ENCODE measurements at regions of chr3 and their contacts with region 1.

Region 1: DNA sequence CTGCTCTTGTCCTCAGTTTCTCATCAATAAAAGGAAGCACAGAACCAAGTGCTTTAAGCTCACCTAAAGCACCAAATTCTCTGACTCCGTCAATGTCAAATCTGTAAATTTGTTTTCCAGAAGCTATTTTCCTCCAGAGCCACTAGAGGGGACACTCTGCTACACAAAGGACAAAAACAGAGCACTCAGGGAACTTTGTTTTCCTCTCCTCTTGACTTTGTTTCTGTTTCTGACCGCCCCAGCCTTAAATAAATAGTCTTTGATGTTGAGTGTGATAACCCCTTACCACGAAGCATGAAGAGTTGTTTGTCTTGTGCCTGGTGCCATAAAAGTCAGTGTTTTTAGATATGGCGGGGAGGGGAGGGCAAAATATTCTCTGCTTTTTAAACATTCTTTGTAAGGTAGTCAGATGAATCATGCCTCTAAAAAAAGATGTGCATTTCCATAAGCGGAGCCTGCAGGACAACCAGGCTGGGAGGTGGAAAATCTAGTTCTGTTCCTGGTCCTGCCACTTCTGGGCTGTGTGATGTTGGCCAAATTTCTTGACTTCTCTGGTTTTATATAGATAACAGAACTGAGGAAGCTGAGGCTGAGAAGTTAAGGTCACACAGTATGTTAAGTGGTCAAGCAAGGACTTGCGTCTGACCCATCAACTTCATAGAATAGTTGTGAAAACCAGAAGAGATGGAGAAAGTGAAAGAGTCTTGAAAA is 7.3 kb upstream of the ZBTB38 start:
- DNase-seq: no peak
- ATAC-seq: peak; percentile 86
- H3K4me3 Mint-ChIP-seq: no peak overlapping the region; the same call in 1 of the 2 replicates
- H3K27ac Mint-ChIP-seq: peak overlapping the region; percentile 26; the same call in 1 of the 2 replicates
- H3K4me1 Mint-ChIP-seq: peaks cover 13% of the 10 kb centered on the region
- H3K27me3 Mint-ChIP-seq: no peaks in the 10 kb centered on the region
- CTCF ChIP-seq: 0 out of 2 replicates have a peak, but pooled peaks have one; percentile 15

Region 2: DNA sequence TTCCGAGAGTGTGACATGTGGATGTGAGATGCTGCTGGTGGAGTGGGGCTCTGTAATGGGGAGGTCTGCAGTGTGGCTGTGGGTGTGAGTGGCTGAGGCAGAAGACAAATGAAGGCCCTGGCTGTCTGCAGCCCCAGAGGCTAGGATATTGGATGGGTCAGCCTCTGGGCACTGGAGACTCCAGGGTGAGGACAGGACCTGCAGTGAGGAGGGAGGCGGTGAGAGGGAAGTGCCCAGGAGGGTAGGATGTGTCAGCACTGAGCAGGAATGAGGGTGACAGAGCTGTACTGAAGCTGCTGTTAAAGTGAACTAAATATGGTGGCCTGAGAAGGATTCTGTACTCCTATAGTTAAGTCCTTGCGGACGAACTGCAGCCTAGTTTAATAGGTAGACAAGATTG is 156.7 kb before region 1 on chr3:
- CTCF ChIA-PET with region 1: no interaction called
- POLR2A ChIA-PET with region 1: no interaction called
- DNase-seq: no peak
- ATAC-seq: no peak
- H3K4me3 Mint-ChIP-seq: no peak overlapping the region
- H3K27ac Mint-ChIP-seq: no peak overlapping the region
- H3K4me1 Mint-ChIP-seq: peaks cover 14% of the 10 kb centered on the region
- H3K27me3 Mint-ChIP-seq: no peaks in the 10 kb centered on the region; the same call in 1 of the 2 replicates
- CTCF ChIP-seq: no peak

Region 3: DNA sequence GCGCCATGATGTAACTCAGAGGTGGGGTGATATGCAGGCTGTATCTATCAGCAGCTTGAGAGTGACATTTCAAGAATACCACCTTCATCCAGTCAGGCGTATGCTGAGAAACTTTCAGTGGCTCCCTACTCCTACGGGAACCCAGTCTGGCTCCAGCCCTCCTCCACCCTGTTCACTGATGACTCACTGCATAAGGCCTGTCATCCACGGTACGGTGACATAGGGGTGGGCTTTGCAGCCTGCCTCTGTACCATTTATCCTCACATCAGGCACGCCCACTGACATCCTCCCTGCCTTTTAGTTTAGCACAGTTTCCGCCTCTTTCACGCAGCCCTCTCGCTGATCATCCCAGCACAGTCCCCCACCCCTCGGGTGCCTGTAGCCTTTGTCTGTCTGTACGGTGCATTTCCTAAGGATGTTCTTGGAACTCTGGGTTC is 117.8 kb before region 1 on chr3:
- CTCF ChIA-PET with region 1: no interaction called
- POLR2A ChIA-PET with region 1: no interaction called
- DNase-seq: no peak
- ATAC-seq: peak; percentile 25; the same call in 1 of the 2 replicates
- H3K4me3 Mint-ChIP-seq: no peak overlapping the region
- H3K27ac Mint-ChIP-seq: no peak overlapping the region
- H3K4me1 Mint-ChIP-seq: peaks cover 25% of the 10 kb centered on the region
- H3K27me3 Mint-ChIP-seq: no peaks in the 10 kb centered on the region
- CTCF ChIP-seq: no peak

Region 4: DNA sequence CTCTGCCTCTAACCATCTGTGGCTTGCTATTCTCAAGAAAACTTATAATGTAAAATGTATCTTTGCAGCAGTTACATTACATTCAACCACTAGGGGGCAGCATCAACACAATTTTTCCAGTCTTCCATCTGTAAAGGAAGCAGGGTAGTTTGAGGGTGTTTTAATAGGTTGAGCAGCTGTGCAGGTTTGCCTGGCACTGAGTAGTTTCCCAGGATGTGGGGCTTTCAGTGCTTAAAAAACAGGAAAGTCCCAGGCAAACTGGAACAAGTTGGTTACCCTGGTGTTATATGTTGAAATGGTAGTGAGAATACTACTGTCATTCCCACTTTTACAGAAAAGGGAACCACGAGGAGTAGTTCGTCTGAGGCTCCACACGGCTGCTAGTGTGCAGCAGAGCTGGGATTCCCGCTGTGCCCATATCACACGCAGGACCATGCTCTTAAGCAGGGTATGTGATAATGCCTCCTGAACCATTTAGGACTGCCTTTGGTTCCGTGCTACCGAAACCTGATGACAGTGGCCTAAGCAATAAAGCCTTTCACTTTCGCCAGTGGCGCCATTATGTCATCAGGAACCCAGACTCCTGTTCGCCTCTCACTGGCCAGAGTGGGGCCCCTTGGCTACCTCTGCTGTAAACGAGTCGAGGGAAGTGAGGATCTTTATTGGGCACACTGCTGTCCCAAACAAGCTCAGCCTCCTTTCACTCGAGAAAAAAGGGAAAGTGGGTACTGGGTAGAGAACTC is 57.4 kb before region 1 on chr3:
- CTCF ChIA-PET with region 1: interaction called, 12 read pairs
- POLR2A ChIA-PET with region 1: no interaction called
- DNase-seq: peak; percentile 33
- ATAC-seq: peak; percentile 77
- H3K4me3 Mint-ChIP-seq: no peak overlapping the region
- H3K27ac Mint-ChIP-seq: no peak overlapping the region
- H3K4me1 Mint-ChIP-seq: peaks cover 4% of the 10 kb centered on the region
- H3K27me3 Mint-ChIP-seq: peaks cover 28% of the 10 kb centered on the region
- CTCF ChIP-seq: peak; percentile 66

Region 5: DNA sequence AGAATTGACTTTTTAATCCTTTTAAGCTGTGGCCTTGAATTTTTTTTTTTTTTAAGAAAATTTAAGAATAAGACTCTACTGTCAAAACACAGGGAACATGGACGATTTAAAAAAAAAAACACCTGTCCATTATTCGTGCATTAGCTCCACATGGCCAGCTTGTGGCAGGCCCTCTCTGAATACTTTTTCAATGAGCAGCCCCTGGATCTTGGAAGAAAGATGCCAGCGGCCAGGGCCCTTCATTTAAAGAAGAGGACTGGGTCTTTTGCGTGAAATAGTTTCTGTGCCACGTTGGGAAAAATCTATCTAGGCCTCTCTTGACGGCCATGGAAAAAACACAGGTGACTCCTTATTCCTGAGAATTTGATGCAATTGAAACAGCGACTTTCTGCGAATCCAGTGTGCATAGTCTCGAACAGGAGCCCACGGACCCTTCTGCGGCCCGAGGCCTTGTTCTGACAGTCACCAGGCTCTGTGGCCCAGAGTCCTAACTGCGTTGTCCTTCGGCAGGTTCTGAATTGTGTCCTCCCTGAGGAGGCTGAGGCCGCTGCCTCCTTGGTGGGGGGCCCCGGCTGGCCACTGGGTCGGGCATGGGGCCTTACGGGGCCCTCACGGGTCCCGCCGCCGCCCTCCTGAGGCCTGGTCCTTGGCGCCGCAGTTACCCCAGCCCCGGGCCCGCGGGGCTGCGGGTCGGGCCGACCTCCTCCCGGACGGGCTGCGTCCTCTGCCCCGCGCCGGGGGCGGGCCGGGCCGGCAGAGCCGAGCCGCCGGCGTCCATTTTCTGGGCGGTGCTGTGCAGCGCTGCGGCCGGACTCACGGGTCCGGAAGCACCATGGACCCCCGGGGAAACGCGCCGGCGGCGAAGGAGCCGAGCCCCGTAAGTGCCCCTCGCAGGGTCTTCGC is 40.8 kb after region 1 on chr3:
- CTCF ChIA-PET with region 1: interaction called, 12 read pairs
- POLR2A ChIA-PET with region 1: no interaction called
- DNase-seq: peak; percentile 56
- ATAC-seq: peak; percentile 77
- H3K4me3 Mint-ChIP-seq: peak overlapping the region; percentile 68
- H3K27ac Mint-ChIP-seq: no peak overlapping the region; the same call in 1 of the 2 replicates
- H3K4me1 Mint-ChIP-seq: peaks cover 33% of the 10 kb centered on the region
- H3K27me3 Mint-ChIP-seq: peaks cover 25% of the 10 kb centered on the region
- CTCF ChIP-seq: no peak

Region 6: DNA sequence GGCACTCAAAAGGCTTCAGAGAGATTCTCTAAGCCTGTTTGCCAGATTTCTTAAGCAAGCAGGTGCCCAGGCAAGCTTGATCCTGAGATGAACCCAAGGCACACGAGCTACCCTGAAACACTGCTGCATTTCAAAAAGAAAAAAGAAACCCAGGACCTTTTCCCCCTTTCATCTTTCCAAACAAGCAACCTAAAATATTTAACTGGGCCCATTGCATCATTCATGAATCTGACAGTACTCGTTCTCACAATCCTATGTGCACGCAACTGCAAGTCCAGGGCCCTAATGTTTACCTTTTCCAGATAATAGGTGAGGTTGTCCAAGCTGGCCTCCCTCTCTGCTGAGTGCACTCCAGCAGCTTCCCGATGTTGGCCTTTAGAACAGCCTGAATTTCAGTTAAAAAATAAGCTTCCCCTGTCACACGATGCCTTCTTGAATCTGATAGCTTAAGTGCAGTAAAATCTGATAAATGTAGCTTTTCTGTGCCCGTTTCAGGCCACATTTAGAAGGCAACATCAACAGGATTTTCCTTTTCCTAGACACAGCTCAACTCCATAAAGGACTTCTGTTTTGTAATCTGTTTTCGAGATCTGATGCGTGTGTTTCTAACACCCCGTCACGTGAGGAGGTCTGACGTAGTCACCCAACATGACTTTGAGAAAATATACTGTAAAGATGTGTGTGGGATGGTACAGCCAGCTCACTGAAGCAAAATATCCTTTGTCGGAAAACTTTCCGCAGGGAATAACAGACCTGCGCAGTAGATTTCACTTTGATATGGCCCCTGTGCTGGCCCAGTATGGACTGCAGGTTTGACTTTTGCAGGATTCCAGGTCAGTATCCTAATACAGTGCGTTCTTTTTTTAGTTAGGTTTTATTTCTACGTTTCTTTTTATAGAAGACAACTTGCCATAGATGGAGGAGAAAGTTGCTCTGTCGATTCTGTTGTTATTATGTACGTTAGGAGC is 70.7 kb after region 1 on chr3:
- CTCF ChIA-PET with region 1: interaction called, 12 read pairs
- POLR2A ChIA-PET with region 1: no interaction called
- DNase-seq: no peak
- ATAC-seq: no peak
- H3K4me3 Mint-ChIP-seq: no peak overlapping the region
- H3K27ac Mint-ChIP-seq: no peak overlapping the region
- H3K4me1 Mint-ChIP-seq: peaks cover 12% of the 10 kb centered on the region
- H3K27me3 Mint-ChIP-seq: no peaks in the 10 kb centered on the region
- CTCF ChIP-seq: no peak

Region 7: DNA sequence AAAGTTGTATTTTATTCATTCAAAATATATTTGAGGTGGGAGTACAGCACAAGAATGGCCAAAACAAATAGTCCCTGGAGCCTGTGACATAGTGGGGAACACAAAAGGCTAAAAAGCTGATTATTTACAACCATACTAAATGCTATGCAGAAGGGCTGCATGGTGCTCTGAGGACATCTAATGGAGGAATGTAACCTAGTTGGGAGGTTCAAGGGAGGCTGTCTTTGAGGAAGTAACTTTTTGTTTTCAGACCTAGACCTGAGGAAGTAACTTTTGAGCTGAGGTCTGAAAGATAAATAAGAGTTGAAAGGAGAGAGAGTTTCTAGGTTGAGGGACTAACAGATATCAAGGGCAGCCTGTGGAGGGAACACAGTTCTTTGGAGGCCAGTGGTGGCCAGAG is 91.0 kb after region 1 on chr3:
- CTCF ChIA-PET with region 1: interaction called, 87 read pairs
- POLR2A ChIA-PET with region 1: no interaction called
- DNase-seq: no peak
- ATAC-seq: peak; percentile 68
- H3K4me3 Mint-ChIP-seq: no peak overlapping the region
- H3K27ac Mint-ChIP-seq: no peak overlapping the region
- H3K4me1 Mint-ChIP-seq: peaks cover 14% of the 10 kb centered on the region
- H3K27me3 Mint-ChIP-seq: peaks cover 4% of the 10 kb centered on the region; the same call in 1 of the 2 replicates
- CTCF ChIP-seq: no peak

Region 8: GRCh38 chr3:141487521-141488252 is 126.6 kb after region 1 on chr3:
- CTCF ChIA-PET with region 1: no interaction called
- POLR2A ChIA-PET with region 1: no interaction called
- DNase-seq: peak; percentile 79
- ATAC-seq: peak; percentile 72
- H3K4me3 Mint-ChIP-seq: peak overlapping the region; percentile 88
- H3K27ac Mint-ChIP-seq: peak overlapping the region; percentile 86; the same call in 1 of the 2 replicates
- H3K4me1 Mint-ChIP-seq: peaks cover 44% of the 10 kb centered on the region
- H3K27me3 Mint-ChIP-seq: peaks cover 8% of the 10 kb centered on the region; the same call in 1 of the 2 replicates
- CTCF ChIP-seq: no peak

Measured in WTC11 (cell line).